ENCODE measurements at regions of chr11 and their contacts with region 1.

Region 1: DNA sequence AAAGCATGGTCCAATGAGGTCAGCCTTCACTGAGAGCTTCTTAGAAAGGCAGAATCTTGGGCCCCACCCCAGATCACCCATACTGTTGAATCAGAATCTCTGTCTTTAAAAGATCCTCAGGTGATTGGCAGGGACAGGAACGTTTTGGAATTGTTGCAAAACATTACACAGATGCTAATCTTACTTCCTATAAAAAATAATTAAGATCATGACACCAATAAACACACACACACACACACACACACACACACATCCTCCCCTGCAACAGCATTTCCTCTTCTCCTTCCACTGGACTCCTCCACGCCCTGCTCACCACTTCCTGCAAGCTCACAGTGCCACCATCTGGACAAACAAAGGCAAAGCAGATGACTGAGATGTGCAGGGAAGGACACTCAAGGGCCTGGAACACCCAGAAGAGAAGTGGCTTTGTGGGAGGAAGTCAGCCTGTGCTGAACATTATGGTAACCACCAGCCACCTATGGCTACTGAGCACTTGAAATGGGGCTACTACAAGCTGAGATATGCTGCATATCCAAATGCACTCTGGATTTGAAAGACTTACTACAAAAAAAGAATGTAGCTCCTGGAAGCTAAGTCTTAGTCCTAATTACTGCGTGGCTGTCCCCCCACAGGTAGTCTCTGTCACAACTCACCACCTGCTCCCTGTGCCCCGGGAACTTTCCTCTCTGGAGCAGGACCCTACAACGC is 65.6 kb downstream of the BTG4 start:
- DNase-seq: peak; percentile 55 to 89 (median 81)
- H3K4me3 ChIP-seq: no peak overlapping the region
- H3K4me3 Mint-ChIP-seq: peak overlapping the region in 5 of 7 donors; percentile 0 to 38 (median 10)
- H3K27ac ChIP-seq: no peak overlapping the region
- H3K27ac Mint-ChIP-seq: peak overlapping the region; percentile 7 to 91 (median 42)
- H3K4me1 ChIP-seq: peaks cover 11% of the 10 kb centered on the region
- H3K4me1 Mint-ChIP-seq: peaks cover 14 to 19% (median 17%) of the 10 kb centered on the region in 3 donors
- H3K27me3 ChIP-seq: no peaks in the 10 kb centered on the region
- H3K27me3 Mint-ChIP-seq: peaks cover 0 to 7% of the 10 kb centered on the region in 2 donors

Region 2: DNA sequence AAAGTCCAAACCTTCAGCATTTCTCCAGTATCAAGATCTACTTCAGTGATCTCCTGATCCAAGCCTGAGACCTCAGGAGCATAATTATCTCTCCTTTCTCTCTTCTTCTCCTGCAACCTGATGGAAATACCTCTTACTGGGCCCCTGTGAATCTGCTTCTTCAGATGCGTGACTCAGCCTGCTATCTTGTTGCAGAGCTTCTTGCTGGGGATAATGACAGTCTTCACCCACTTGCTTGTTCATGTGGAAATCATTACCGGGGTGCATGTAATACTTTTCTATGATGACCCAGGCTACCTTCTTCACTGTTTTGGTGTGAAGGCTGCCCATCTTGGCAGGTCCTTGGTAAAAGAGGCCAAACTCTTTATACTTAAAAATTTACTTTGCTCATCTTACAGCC is 341.0 kb before region 1 on chr11:
- CTCF ChIA-PET with region 1: no interaction called
- POLR2A ChIA-PET with region 1: no interaction called
- DNase-seq: no peak
- H3K4me3 ChIP-seq: no peak overlapping the region
- H3K4me3 Mint-ChIP-seq: no peak overlapping the region
- H3K27ac ChIP-seq: no peak overlapping the region
- H3K27ac Mint-ChIP-seq: no peak overlapping the region
- H3K4me1 ChIP-seq: no peaks in the 10 kb centered on the region
- H3K4me1 Mint-ChIP-seq: no peaks in the 10 kb centered on the region
- H3K27me3 ChIP-seq: no peaks in the 10 kb centered on the region
- H3K27me3 Mint-ChIP-seq: peaks cover 3 to 28% of the 10 kb centered on the region in 2 donors

Region 3: GRCh38 chr11:111283945-111284481 is 162.5 kb before region 1 on chr11:
- CTCF ChIA-PET with region 1: interaction called, 53 read pairs
- POLR2A ChIA-PET with region 1: no interaction called
- DNase-seq: no peak
- H3K4me3 ChIP-seq: no peak overlapping the region
- H3K4me3 Mint-ChIP-seq: no peak overlapping the region
- H3K27ac ChIP-seq: no peak overlapping the region
- H3K27ac Mint-ChIP-seq: peak overlapping the region in 1 of 8 donors; percentile 66
- H3K4me1 ChIP-seq: no peaks in the 10 kb centered on the region
- H3K4me1 Mint-ChIP-seq: no peaks in the 10 kb centered on the region
- H3K27me3 ChIP-seq: no peaks in the 10 kb centered on the region
- H3K27me3 Mint-ChIP-seq: peaks cover 0 to 3% of the 10 kb centered on the region in 2 donors

Region 4: DNA sequence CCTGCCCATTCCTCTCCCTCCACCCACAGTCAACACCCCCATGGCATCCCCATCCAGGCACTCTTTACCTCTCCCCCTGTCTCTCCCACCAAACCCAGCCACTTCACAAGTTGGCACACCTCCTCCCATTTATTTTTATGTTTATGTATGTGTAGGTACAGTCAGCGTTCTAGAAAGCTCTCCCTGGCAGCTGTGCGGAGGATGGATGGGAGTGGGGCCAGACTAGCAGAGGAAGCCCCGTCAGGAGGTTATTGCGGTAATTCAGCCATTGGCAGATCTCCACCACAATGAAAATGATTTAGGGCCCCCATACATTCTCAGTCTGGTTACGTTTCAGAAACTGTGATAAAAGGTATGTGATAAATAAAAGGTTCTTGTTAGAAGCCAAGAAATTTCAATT is 14.3 kb after region 1 on chr11:
- CTCF ChIA-PET with region 1: interaction called, 13 read pairs
- POLR2A ChIA-PET with region 1: no interaction called
- DNase-seq: no peak
- H3K4me3 ChIP-seq: no peak overlapping the region
- H3K4me3 Mint-ChIP-seq: no peak overlapping the region
- H3K27ac ChIP-seq: no peak overlapping the region
- H3K27ac Mint-ChIP-seq: peak overlapping the region in 1 of 8 donors; percentile 65
- H3K4me1 ChIP-seq: no peaks in the 10 kb centered on the region
- H3K4me1 Mint-ChIP-seq: no peaks in the 10 kb centered on the region
- H3K27me3 ChIP-seq: no peaks in the 10 kb centered on the region
- H3K27me3 Mint-ChIP-seq: peaks cover 12 to 45% of the 10 kb centered on the region in 2 donors